Common myeloid progenitor, CD34-positive (primary cell): ENCODE measurements at regions of chr2 and their contacts with region 1.

Region 1: DNA sequence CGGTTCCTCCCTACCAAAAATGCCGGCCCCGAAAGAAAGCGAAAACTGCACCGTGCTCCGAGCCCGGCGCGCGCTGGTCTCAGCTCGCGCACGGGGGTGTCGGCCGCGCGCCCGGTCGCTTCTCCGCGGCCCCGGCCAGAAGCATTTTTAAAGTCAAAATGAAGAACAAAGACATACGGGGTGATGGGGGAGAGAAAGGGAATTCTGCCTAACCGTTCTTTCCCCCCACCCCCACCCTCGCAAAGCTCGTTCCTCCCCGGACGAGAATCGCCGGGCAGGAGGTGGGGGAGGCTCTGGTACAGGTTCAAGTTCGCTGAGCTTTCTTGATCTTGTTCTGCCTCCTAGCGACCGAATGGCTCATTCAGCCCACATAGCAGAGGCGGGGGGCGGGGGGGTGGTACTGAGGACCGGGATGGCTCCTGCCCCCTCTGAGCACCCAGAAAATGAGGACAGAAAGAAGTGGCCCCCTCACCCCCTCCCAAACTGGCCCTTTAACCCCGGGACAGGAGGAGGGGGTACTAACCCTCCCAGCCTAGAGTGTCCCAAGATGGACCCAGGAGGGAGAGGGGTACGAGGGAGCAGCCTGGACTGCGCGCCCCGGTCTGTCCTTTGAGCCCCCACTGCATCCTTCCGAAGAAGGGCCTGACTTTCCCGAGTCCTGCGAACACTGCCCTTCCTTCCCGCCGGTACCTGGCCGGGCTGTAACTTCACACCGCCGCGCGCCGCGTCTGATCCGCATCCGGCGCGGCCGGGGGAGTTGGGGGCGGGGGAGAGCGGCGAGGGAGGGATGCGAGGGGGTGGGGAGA is 3.1 kb downstream of the BCL11A start:
- DNase-seq: peak; percentile 91 to 95 (median 95)
- H3K4me3 ChIP-seq: peak overlapping the region; percentile 76 to 100 (median 94)
- H3K27ac ChIP-seq: peak overlapping the region; percentile 68 to 88
- H3K4me1 ChIP-seq: peaks cover 25 to 51% (median 40%) of the 10 kb centered on the region in 4 experiments
- H3K27me3 ChIP-seq: no peaks in the 10 kb centered on the region

Region 2: GRCh38 chr2:60152226-60152833 is 398.1 kb before region 1 on chr2:
- CTCF ChIA-PET with region 1: no interaction called
- POLR2A ChIA-PET with region 1: interaction called, 11 read pairs
- DNase-seq: peak; percentile 43 to 70 (median 63)
- H3K4me3 ChIP-seq: no peak overlapping the region
- H3K27ac ChIP-seq: no peak overlapping the region
- H3K4me1 ChIP-seq: peaks cover 10 to 27% (median 24%) of the 10 kb centered on the region in 4 experiments
- H3K27me3 ChIP-seq: no peaks in the 10 kb centered on the region

Region 3: GRCh38 chr2:60505880-60506260 is 44.5 kb before region 1 on chr2:
- CTCF ChIA-PET with region 1: interaction called, 10 read pairs
- POLR2A ChIA-PET with region 1: no interaction called
- DNase-seq: peak in 2 of 3 donors; percentile 52 to 62
- H3K4me3 ChIP-seq: no peak overlapping the region
- H3K27ac ChIP-seq: peak overlapping the region; percentile 4 to 44
- H3K4me1 ChIP-seq: peaks cover under 1 to 55% (median 19%) of the 10 kb centered on the region in 4 experiments
- H3K27me3 ChIP-seq: no peaks in the 10 kb centered on the region